ENCODE measurements at regions of chr6 and their contacts with region 1.

Region 1: GRCh38 chr6:118317581-118318563 is 230.2 kb upstream of the PLN start:
- DNase-seq: no peak
- H3K4me3 ChIP-seq: peak overlapping the region in 1 of 2 donors; percentile 4
- H3K27ac ChIP-seq: peak overlapping the region; percentile 77 to 88
- H3K4me1 ChIP-seq: peaks cover 4 to 97% (median 39%) of the 10 kb centered on the region in 4 donors
- H3K27me3 ChIP-seq: no peaks in the 10 kb centered on the region
- CTCF ChIP-seq: no peak

Region 2: GRCh38 chr6:118297821-118298220 is 20.1 kb before region 1 on chr6:
- intact Hi-C with region 1: loop called (anchors 2 kb)
- DNase-seq: no peak
- H3K4me3 ChIP-seq: no peak overlapping the region
- H3K27ac ChIP-seq: peak overlapping the region; percentile 85
- H3K4me1 ChIP-seq: peaks cover 0 to 63% (median 31%) of the 10 kb centered on the region in 4 donors
- H3K27me3 ChIP-seq: no peaks in the 10 kb centered on the region
- CTCF ChIP-seq: no peak

Region 3: GRCh38 chr6:118387764-118388701 is 70.2 kb after region 1 on chr6:
- intact Hi-C with region 1: no loop called
- DNase-seq: no peak
- H3K4me3 ChIP-seq: no peak overlapping the region
- H3K27ac ChIP-seq: no peak overlapping the region
- H3K4me1 ChIP-seq: peaks cover 0 to 25% (median 0%) of the 10 kb centered on the region in 4 donors
- H3K27me3 ChIP-seq: no peaks in the 10 kb centered on the region
- CTCF ChIP-seq: no peak

Region 4: GRCh38 chr6:118651282-118652050 is 333.6 kb after region 1 on chr6 and contains the start of gene CEP85L:
- intact Hi-C with region 1: no loop called
- DNase-seq: peak; percentile 89 to 94
- H3K4me3 ChIP-seq: peak within 1 kb of the TSS; percentile 69 to 86
- H3K27ac ChIP-seq: peak within 1 kb of the TSS; percentile 91 to 95
- H3K4me1 ChIP-seq: peaks cover 0 to 18% (median 10%) of the 10 kb centered on the region in 4 donors
- H3K27me3 ChIP-seq: no peaks in the 10 kb centered on the region
- CTCF ChIP-seq: peak in 1 of 2 experiments; percentile 36

Region 5: DNA sequence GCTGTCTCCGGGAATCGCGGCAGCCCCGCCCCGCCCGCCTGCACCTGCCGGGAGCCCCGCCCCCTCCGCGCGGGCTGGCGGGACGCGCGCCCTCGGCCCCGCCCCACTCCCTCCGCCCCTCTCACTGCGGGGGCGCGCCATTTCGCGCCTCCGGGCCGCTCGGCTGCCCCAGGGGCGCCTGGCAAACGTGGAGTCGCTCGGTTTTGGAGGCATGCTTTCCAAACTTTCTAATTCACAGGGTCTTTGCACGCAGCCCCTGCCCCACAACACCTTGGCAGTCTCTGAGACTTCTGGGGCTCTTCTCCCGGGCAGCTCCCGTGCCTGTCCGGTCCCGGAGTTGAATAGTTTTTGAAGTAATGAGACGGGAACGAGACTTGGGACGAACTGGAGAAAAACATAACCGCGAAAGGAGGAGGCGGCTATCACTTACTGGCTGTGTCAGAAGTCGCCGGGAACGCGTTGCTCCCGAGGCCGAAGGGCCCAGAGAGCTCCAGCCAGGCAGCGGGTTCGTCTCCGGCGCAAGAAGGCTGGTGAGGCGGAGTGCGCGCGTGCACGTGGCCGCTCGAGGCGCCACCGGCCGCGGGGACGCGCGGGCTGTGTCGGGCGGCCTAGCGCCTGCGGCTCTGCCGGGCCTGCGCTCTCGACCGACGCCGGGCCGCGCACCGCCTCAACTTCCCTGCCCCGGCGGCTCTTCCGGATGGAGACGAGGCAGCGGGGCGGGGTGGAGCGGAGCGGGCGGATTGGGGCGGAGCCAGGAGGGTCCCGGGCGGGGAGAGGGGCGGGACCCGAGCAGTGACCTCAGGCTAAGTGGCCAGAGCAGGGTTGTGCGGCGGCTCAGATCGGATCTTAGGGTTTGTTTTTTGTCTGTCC is 616.8 kb after region 1 on chr6 and contains the start of gene MCM9:
- intact Hi-C with region 1: no loop called
- DNase-seq: peak; percentile 79 to 91
- H3K4me3 ChIP-seq: peak within 1 kb of the TSS; percentile 64 to 80
- H3K27ac ChIP-seq: peak within 1 kb of the TSS; percentile 90 to 96
- H3K4me1 ChIP-seq: peaks cover 0 to 15% (median 7%) of the 10 kb centered on the region in 4 donors
- H3K27me3 ChIP-seq: no peaks in the 10 kb centered on the region
- CTCF ChIP-seq: no peak